ENCODE measurements at regions of chr16 and their contacts with region 1.

Region 1: GRCh38 chr16:3305109-3306068 is at the starts of genes TIGD7 and ZNF75A:
- DNase-seq: peak; percentile 86 to 87 (median 86)
- H3K4me3 ChIP-seq: peak within 1 kb of the TSS; percentile 67 to 78 (median 76)
- H3K4me3 Mint-ChIP-seq: peak within 1 kb of the TSS; percentile 79 to 86
- H3K27ac ChIP-seq: peak within 1 kb of the TSS; percentile 86 to 90
- H3K27ac Mint-ChIP-seq: peak within 1 kb of the TSS; percentile 80 to 93 (median 89)
- H3K4me1 ChIP-seq: peaks cover 12 to 22% of the 10 kb centered on the region in 2 donors
- H3K4me1 Mint-ChIP-seq: peaks cover 13% of the 10 kb centered on the region
- H3K27me3 ChIP-seq: no peaks in the 10 kb centered on the region
- H3K27me3 Mint-ChIP-seq: peaks cover 0 to 7% (median 3%) of the 10 kb centered on the region in 3 donors
- CTCF ChIP-seq: no peak
- polyA plus RNA-seq, gene TIGD7: 0.32 to 1.4 (median 0.64) TPM
- polyA plus RNA-seq, gene ZNF75A: 2.3 to 10.2 (median 2.8) TPM

Region 2: GRCh38 chr16:3264137-3265036 is 41.0 kb before region 1 on chr16:
- intact Hi-C with region 1: loop called in 1 of 2 experiments (anchors 2 kb)
- DNase-seq: peak; percentile 90 to 94 (median 92)
- H3K4me3 ChIP-seq: peak overlapping the region; percentile 81 to 89 (median 81)
- H3K4me3 Mint-ChIP-seq: peak overlapping the region; percentile 86 to 91
- H3K27ac ChIP-seq: peak overlapping the region; percentile 99 to 100
- H3K27ac Mint-ChIP-seq: peak overlapping the region; percentile 96 to 100 (median 98)
- H3K4me1 ChIP-seq: peaks cover 54 to 63% of the 10 kb centered on the region in 2 donors
- H3K4me1 Mint-ChIP-seq: peaks cover 68% of the 10 kb centered on the region
- H3K27me3 ChIP-seq: no peaks in the 10 kb centered on the region
- H3K27me3 Mint-ChIP-seq: peaks cover 0 to 6% (median 0%) of the 10 kb centered on the region in 3 donors
- CTCF ChIP-seq: peak; percentile 58